ENCODE measurements at regions of chr21 and their contacts with region 1.

Region 1: DNA sequence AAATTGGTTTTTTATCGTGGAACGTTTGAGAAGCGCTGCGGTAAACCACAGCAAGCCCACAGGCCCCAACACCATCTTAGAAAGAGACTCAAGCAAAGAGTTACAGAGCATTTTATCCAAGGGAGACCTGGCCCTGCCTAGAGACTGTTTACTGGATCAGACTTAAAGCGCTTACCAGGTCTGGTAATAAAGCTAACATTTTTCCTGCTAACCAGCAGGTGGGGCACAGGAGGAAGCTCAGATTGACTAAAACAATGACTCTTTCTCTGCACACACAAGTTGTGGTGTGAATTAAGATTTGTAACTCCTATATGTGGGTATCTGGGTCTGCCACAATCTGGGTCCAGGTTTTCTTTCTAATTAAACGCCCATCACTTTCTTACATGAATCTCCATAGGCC is 136.6 kb upstream of the ETS2 start:
- DNase-seq: peak; percentile 45
- H3K4me3 ChIP-seq: no peak overlapping the region
- H3K27ac ChIP-seq: no peak overlapping the region
- H3K4me1 ChIP-seq: no peaks in the 10 kb centered on the region
- H3K27me3 ChIP-seq: peaks cover 33 to 36% of the 10 kb centered on the region in 2 experiments
- CTCF ChIP-seq: peak; percentile 36 to 52
- POLR2A ChIP-seq: no peak

Region 2: GRCh38 chr21:38712071-38712470 is 42.9 kb after region 1 on chr21:
- CTCF ChIA-PET with region 1: interaction called, 22 read pairs
- POLR2A ChIA-PET with region 1: no interaction called
- dilution Hi-C with region 1: no loop called
- intact Hi-C with region 1: loop called (anchors 2 kb)
- DNase-seq: peak; percentile 68
- H3K4me3 ChIP-seq: no peak overlapping the region
- H3K27ac ChIP-seq: no peak overlapping the region
- H3K4me1 ChIP-seq: no peaks in the 10 kb centered on the region
- H3K27me3 ChIP-seq: peaks cover 9 to 10% of the 10 kb centered on the region in 2 experiments
- CTCF ChIP-seq: peak in 1 of 2 donors; percentile 55
- POLR2A ChIP-seq: no peak

Region 3: DNA sequence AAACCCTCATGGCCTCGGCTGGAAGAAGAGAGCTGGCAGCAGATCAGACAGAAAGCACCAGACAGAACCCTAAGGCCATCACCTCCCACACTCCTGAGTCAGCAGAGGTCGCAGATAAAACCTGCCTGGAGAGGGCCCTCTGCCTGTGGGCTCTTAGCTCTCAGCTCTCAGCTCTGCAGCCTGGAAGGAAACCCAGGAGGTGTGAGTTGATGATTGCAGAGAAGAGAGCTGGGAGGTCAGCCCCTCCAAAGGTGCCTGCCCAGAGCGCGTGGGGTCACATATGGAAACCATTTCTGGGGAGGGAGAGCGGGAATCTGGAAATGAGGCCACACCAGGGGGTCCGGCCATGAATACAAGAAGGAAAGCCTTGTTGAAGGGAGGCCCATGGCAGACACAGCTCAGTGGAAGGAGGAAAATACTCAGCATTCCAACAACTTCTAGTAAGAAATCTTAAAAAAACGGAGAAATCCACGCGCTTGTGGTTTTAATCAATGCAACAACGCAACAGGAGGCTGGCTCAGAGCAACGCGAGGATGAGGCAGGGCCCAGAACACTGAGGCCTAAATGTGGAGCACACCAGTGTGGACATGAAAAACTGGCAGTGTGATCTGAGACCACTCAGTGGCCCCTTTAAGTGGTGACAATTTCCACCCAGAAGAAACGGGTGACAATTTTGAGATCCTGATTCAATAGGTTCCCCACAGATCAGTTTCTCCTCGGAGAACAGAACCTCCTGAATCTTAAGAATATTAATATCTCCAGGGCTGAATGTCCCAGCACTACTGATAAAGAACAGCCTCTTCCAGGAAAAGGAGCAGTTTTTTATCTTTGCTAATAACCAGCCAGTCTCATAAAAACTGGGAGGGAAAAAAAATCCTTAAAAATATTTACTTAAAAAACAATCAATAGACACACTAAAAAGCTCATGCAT is 468.3 kb after region 1 on chr21:
- CTCF ChIA-PET with region 1: interaction called, 47 read pairs
- POLR2A ChIA-PET with region 1: no interaction called
- dilution Hi-C with region 1: no loop called
- intact Hi-C with region 1: loop called (anchors 1 kb)
- DNase-seq: no peak
- H3K4me3 ChIP-seq: no peak overlapping the region
- H3K27ac ChIP-seq: no peak overlapping the region
- H3K4me1 ChIP-seq: no peaks in the 10 kb centered on the region
- H3K27me3 ChIP-seq: no peaks in the 10 kb centered on the region
- CTCF ChIP-seq: no peak
- POLR2A ChIP-seq: no peak